Breast epithelium (tissue), 4 donors: ENCODE measurements at regions of chr1 and their contacts with region 1.

Region 1: GRCh38 chr1:175991706-175992105 is 215.4 kb downstream of the COP1 start:
- DNase-seq: no peak
- H3K4me3 ChIP-seq: no peak overlapping the region
- H3K27ac ChIP-seq: no peak overlapping the region
- H3K4me1 ChIP-seq: no peaks in the 10 kb centered on the region
- H3K27me3 ChIP-seq: no peaks in the 10 kb centered on the region
- CTCF ChIP-seq: no peak
- POLR2A ChIP-seq: no peak

Region 2: DNA sequence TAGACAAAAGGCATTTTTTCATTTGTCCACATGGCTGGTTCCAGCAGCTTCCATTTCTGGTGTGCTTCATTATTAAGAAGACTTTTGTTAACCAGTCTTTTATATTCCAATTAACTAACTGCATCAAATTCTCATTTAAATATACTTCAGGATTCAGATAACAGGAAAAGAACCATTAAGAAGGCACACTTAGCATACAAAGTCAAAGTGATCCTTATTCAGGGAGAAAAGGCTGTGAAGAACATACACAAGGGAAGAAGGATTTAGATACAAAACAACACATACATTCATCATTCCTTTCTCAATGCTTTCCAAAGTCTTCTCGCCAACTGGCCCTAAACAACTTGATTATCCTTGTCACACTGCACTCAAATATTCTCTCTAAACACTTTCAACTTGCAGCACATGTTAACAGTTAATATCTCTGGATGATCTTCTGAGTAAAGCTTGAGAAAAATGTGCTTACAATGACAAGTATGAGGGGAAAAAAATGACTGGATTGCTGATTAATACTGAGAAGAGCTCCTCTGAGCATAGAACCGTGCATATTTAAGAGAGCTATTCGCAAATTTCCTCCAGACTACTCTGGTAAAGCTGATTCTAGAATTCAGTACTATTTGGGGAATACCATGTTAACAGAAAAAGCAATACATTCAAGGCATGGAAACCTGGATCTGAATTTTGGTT is 23.1 kb before region 1 on chr1:
- intact Hi-C with region 1: loop called (anchors 2 kb)
- DNase-seq: no peak
- H3K4me3 ChIP-seq: no peak overlapping the region
- H3K27ac ChIP-seq: no peak overlapping the region
- H3K4me1 ChIP-seq: no peaks in the 10 kb centered on the region
- H3K27me3 ChIP-seq: no peaks in the 10 kb centered on the region
- CTCF ChIP-seq: no peak
- POLR2A ChIP-seq: no peak

Region 3: GRCh38 chr1:177328251-177328650 is 1336.5 kb after region 1 on chr1:
- intact Hi-C with region 1: no loop called
- DNase-seq: no peak
- H3K4me3 ChIP-seq: no peak overlapping the region
- H3K27ac ChIP-seq: no peak overlapping the region
- H3K4me1 ChIP-seq: no peaks in the 10 kb centered on the region
- H3K27me3 ChIP-seq: no peaks in the 10 kb centered on the region
- CTCF ChIP-seq: no peak
- POLR2A ChIP-seq: no peak

Region 4: GRCh38 chr1:177432897-177433296 is 1441.2 kb after region 1 on chr1:
- intact Hi-C with region 1: no loop called
- DNase-seq: no peak
- H3K4me3 ChIP-seq: no peak overlapping the region
- H3K27ac ChIP-seq: no peak overlapping the region
- H3K4me1 ChIP-seq: no peaks in the 10 kb centered on the region
- H3K27me3 ChIP-seq: no peaks in the 10 kb centered on the region
- CTCF ChIP-seq: no peak
- POLR2A ChIP-seq: no peak